ENCODE measurements at regions of chr1 and their contacts with region 1.

Region 1: GRCh38 chr1:110780600-110781484 is 92.1 kb upstream of the CD53 start:
- DNase-seq: peak; percentile 84
- ATAC-seq: peak; percentile 68
- H3K4me3 Mint-ChIP-seq: no peak overlapping the region
- H3K27ac Mint-ChIP-seq: no peak overlapping the region
- H3K4me1 Mint-ChIP-seq: peaks cover 32% of the 10 kb centered on the region
- H3K27me3 Mint-ChIP-seq: no peaks in the 10 kb centered on the region

Region 2: DNA sequence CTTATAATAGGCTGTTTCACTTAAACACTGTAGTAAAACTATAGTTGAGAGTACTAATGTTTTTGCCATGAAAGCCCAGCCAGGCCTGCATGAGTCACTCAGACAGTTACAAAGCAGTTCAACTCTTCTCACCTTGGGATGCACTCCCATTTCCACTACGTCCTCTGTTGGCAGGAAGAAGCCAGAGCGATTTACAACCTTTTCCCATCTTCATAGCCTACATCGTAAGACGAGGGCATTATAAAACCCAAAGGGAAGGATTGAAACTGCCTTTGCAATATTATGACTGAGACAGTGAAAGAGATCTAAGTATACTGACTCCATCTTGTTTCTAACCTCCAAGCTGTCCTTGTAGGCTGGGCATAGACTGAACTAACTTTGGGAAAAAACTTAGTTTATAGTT is 942.0 kb before region 1 on chr1:
- CTCF ChIA-PET with region 1: no interaction called
- POLR2A ChIA-PET with region 1: no interaction called
- intact Hi-C with region 1: no loop called
- DNase-seq: no peak
- ATAC-seq: no peak
- H3K4me3 Mint-ChIP-seq: no peak overlapping the region
- H3K27ac Mint-ChIP-seq: no peak overlapping the region
- H3K4me1 Mint-ChIP-seq: no peaks in the 10 kb centered on the region
- H3K27me3 Mint-ChIP-seq: peaks cover 5% of the 10 kb centered on the region

Region 3: DNA sequence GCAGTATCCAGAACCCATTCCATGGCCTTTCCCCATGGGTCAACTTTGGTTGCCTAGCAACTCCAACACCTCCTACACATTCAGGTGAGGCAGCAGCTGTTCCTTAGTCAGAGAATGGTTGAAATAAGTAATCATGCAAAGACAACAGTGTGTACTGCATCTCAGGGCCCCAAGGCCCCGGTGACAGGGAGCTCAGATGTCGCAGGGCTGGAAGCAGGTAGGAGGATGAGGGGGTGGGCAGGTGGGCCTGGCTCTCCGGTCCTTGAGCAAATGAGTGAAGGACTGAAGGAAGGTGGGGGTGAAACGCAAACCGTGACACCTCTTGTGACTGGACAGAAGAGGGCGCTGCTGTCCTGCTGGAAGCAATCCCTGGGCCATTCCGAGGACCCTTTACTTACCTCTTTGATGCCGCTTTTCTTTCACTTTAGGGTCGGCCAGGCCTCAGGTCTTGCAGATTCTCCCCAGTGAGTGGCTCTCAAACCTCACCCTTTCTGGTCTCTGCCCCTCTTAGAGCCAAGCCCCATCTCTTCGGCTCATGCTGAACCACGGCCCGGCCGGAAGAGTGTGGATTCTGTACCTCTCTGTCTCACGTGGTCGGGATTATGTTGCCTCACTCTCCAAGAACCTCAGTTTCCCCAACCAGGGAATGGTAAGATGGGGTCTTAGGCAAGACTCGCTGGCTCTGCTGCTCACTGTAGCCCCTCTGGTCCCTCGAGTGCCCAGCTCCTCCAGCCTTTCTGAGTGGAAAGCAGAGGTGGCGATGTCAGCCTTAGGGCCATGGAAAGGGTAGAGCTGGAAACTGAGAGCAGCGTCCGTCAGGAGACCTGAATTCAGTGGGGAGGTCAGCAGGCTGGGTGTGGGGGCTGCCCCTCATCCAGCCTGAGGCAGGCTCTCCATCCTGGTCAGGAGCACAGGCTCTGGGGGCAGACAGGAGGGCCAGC is 256.3 kb before region 1 on chr1:
- CTCF ChIA-PET with region 1: interaction called, 79 read pairs
- POLR2A ChIA-PET with region 1: no interaction called
- intact Hi-C with region 1: loop called (anchors 1 to 2 kb)
- DNase-seq: peak; percentile 75
- ATAC-seq: peak; percentile 88
- H3K4me3 Mint-ChIP-seq: no peak overlapping the region
- H3K27ac Mint-ChIP-seq: no peak overlapping the region
- H3K4me1 Mint-ChIP-seq: peaks cover 2% of the 10 kb centered on the region
- H3K27me3 Mint-ChIP-seq: peaks cover 25% of the 10 kb centered on the region

Region 4: GRCh38 chr1:110619412-110620249 is 161.2 kb before region 1 on chr1:
- CTCF ChIA-PET with region 1: interaction called, 101 read pairs
- POLR2A ChIA-PET with region 1: no interaction called
- intact Hi-C with region 1: loop called (anchors 1 kb)
- DNase-seq: peak; percentile 94
- ATAC-seq: peak; percentile 89
- H3K4me3 Mint-ChIP-seq: peak overlapping the region; percentile 72
- H3K27ac Mint-ChIP-seq: peak overlapping the region; percentile 60
- H3K4me1 Mint-ChIP-seq: peaks cover 26% of the 10 kb centered on the region
- H3K27me3 Mint-ChIP-seq: no peaks in the 10 kb centered on the region

Region 5: DNA sequence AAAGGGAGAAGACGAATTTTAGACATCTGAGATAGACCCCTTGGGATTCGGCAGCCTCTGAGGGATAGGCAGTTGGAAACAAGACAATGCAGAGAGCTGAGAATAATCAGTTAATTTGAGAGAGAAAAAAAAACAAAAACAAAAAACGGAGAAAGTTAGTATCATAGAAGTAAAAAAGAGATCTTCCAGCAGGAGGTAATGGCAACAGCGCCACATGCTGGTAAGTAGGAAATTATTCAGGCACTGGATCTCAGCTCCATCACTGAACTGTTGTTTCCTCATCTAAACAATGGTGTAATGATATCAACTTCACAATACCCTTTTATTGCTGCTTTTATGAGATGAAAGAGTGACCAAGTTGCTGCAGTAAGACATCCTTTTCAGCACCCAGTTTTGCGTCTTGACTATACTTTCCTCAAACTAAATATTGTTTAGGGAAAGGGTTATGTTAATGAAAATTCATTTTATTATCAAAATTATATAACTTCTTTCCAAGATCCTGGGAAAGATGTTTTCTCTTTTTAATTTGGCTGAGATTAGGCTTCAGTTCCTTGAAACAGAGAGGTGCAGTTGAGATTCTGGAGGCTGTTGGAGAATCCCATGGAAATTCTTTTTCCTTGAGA is 14.7 kb before region 1 on chr1:
- CTCF ChIA-PET with region 1: interaction called, 90 read pairs
- POLR2A ChIA-PET with region 1: no interaction called
- intact Hi-C with region 1: loop called in 1 of 2 experiments (anchors 1 kb)
- DNase-seq: peak; percentile 72
- ATAC-seq: peak; percentile 70
- H3K4me3 Mint-ChIP-seq: peak overlapping the region; percentile 5
- H3K27ac Mint-ChIP-seq: no peak overlapping the region
- H3K4me1 Mint-ChIP-seq: peaks cover 5% of the 10 kb centered on the region
- H3K27me3 Mint-ChIP-seq: peaks cover 6% of the 10 kb centered on the region

Region 6: DNA sequence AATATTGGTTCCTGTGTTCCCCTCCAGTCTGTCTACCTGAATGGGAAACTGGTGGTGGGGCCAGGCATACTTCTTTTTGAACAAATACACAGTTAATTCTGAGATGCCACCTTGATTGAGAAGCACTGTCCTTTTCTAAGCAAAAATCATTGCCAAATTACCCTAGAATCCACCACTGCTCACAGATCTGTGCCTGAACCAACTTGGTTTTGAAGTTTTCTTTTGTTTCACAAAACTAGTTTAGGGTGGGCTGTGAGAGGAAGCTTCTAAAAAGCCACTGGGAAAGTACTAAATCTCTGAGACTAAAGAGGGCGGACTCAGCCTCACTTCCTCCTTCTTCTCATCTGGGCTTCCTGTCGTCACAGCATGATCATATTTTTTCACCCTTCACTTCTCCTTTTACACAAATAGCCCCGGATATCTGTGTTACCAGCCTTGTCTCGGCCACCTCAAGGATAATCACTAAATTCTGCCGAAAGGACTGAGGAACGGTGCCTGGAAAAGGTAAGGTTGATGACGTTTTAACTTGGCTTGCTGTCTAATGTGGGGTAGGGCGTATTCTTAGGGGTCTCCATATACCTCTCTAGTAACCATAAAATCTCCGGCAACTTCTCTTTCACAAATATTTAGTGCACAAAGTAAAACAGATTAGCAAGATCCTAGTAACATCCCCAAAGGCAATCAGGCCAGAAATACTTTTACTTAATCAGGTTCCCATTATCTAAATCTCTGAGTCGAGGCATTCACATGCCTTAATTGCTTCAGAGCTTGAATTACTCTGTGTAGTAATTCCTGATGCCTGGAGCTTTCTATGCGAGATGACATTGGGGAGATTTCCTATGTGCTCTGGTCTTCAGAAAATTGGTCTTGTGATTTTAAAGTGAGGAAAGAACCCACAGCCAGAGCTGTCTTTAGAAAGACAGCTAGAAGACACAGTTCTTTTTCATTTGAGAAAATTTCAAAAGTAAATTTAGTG is 92.2 kb after region 1 on chr1 and contains the start of gene CD53:
- CTCF ChIA-PET with region 1: no interaction called
- POLR2A ChIA-PET with region 1: interaction called, 3 read pairs
- intact Hi-C with region 1: loop called in 1 of 2 experiments (anchors 5 kb)
- DNase-seq: peak; percentile 62
- ATAC-seq: peak; percentile 33
- H3K4me3 Mint-ChIP-seq: peak within 1 kb of the TSS; percentile 85
- H3K27ac Mint-ChIP-seq: peak within 1 kb of the TSS; percentile 95
- H3K4me1 Mint-ChIP-seq: peaks cover 39% of the 10 kb centered on the region
- H3K27me3 Mint-ChIP-seq: no peaks in the 10 kb centered on the region
- total RNA-seq, gene CD53: 238 to 244 TPM

Region 7: GRCh38 chr1:111030590-111030989 is 249.7 kb after region 1 on chr1:
- CTCF ChIA-PET with region 1: interaction called, 38 read pairs
- POLR2A ChIA-PET with region 1: no interaction called
- intact Hi-C with region 1: loop called (anchors 1 to 5 kb)
- DNase-seq: peak; percentile 69
- ATAC-seq: peak; percentile 80
- H3K4me3 Mint-ChIP-seq: no peak overlapping the region
- H3K27ac Mint-ChIP-seq: no peak overlapping the region
- H3K4me1 Mint-ChIP-seq: no peaks in the 10 kb centered on the region
- H3K27me3 Mint-ChIP-seq: peaks cover 5% of the 10 kb centered on the region